AG04450 (cell line): ENCODE measurements at regions of chr2 and their contacts with region 1.

Region 1: GRCh38 chr2:75640621-75641121 is 5.9 kb upstream of the MRPL19 start:
- DNase-seq: peak; percentile 33
- H3K4me3 ChIP-seq: no peak overlapping the region
- H3K27ac ChIP-seq: no peak overlapping the region
- H3K27me3 ChIP-seq: peaks cover 14% of the 10 kb centered on the region
- CTCF ChIP-seq: peak; percentile 100

Region 2: DNA sequence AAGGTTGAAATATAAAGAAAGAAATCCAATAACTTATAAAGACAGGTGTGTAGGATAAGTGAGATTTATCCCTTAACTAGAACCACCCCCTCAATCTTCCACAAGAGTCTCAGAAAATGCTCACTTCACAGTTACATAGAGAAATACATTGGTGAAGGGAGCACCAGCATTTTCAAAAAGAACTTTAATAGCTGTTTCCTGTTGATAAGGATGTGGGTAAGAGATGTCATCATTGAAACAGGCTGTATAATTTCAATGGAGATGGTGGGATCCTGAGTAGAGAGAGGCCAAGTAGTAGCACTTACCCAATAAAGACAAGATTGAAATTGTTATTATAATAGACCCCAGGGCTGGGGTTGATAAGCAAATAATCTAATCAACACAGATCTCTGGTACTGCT is 279.2 kb before region 1 on chr2:
- CTCF ChIA-PET with region 1: no interaction called
- POLR2A ChIA-PET with region 1: no interaction called
- DNase-seq: no peak
- H3K4me3 ChIP-seq: no peak overlapping the region
- H3K27ac ChIP-seq: no peak overlapping the region
- H3K27me3 ChIP-seq: no peaks in the 10 kb centered on the region
- CTCF ChIP-seq: no peak

Region 3: DNA sequence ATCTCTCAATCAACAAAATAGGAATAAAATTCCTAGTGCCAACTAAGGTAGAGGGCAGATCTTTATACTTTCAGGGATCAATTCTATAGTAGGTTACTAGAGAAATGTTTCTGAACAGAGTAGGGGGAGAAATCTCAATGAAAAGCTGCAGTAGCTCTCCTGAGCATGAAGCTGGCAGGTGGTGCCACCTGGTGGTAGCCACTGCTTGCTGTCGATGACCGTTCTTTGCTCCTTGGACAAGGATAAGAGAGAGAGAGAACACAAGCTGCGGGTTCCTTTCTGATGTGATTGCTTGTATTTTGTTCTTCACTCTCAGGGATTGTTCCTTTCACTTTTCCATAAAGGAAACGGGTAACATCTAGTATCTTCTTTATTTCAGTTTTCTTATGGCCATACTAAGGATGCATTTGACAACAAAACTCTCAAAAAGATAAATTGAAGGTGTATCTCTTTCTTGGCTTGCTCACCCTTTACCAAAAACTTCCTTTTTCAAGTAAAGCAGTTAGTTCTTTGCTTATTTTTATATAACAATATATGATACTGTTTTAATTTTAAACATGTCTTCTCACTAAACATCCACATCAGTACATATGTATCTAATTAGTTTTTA is 12.7 kb before region 1 on chr2:
- CTCF ChIA-PET with region 1: interaction called, 17 read pairs
- POLR2A ChIA-PET with region 1: no interaction called
- DNase-seq: no peak
- H3K4me3 ChIP-seq: no peak overlapping the region
- H3K27ac ChIP-seq: no peak overlapping the region
- H3K27me3 ChIP-seq: peaks cover 8% of the 10 kb centered on the region
- CTCF ChIP-seq: peak; percentile 99

Region 4: GRCh38 chr2:75667884-75668283 is 27.2 kb after region 1 on chr2:
- CTCF ChIA-PET with region 1: interaction called, 20 read pairs
- POLR2A ChIA-PET with region 1: no interaction called
- DNase-seq: no peak
- H3K4me3 ChIP-seq: no peak overlapping the region
- H3K27ac ChIP-seq: no peak overlapping the region
- H3K27me3 ChIP-seq: no peaks in the 10 kb centered on the region
- CTCF ChIP-seq: no peak

Region 5: GRCh38 chr2:75716406-75716805 is 75.7 kb after region 1 on chr2:
- CTCF ChIA-PET with region 1: interaction called, 10 read pairs
- POLR2A ChIA-PET with region 1: no interaction called
- DNase-seq: no peak
- H3K4me3 ChIP-seq: no peak overlapping the region
- H3K27ac ChIP-seq: no peak overlapping the region
- H3K27me3 ChIP-seq: no peaks in the 10 kb centered on the region
- CTCF ChIP-seq: no peak